ENCODE measurements at regions of chr3 and their contacts with region 1.

Region 1: GRCh38 chr3:154642145-154642544 is 212.2 kb upstream of the GPR149 start:
- DNase-seq: no peak
- ATAC-seq: no peak
- H3K4me3 ChIP-seq: no peak overlapping the region
- H3K4me3 Mint-ChIP-seq: no peak overlapping the region
- H3K27ac ChIP-seq: no peak overlapping the region
- H3K27ac Mint-ChIP-seq: no peak overlapping the region
- H3K4me1 ChIP-seq: no peaks in the 10 kb centered on the region
- H3K4me1 Mint-ChIP-seq: no peaks in the 10 kb centered on the region
- H3K27me3 ChIP-seq: no peaks in the 10 kb centered on the region
- H3K27me3 Mint-ChIP-seq: no peaks in the 10 kb centered on the region

Region 2: DNA sequence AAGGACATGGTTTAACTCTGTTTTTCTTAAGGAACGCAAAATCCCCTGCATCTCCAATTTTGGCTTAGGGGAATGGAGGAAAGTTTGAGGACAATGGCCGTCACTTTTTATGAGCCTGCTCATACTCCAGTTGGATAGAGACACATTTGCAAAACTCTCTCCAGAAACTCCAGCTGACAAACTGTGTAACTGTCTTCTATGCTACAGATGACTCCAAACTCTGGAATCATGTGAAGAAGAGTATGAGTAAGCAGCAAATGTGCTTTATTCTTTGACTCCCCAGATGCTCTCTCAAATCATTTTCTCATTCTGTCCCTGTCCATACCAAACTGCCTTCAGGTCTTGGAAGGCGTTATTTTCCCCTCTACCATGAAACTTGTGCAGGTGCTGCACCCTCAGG is 14.3 kb after region 1 on chr3:
- CTCF ChIA-PET with region 1: no interaction called
- POLR2A ChIA-PET with region 1: no interaction called
- DNase-seq: no peak
- ATAC-seq: no peak
- H3K4me3 ChIP-seq: no peak overlapping the region
- H3K4me3 Mint-ChIP-seq: no peak overlapping the region
- H3K27ac ChIP-seq: no peak overlapping the region
- H3K27ac Mint-ChIP-seq: no peak overlapping the region
- H3K4me1 ChIP-seq: no peaks in the 10 kb centered on the region
- H3K4me1 Mint-ChIP-seq: no peaks in the 10 kb centered on the region
- H3K27me3 ChIP-seq: no peaks in the 10 kb centered on the region
- H3K27me3 Mint-ChIP-seq: no peaks in the 10 kb centered on the region

Region 3: DNA sequence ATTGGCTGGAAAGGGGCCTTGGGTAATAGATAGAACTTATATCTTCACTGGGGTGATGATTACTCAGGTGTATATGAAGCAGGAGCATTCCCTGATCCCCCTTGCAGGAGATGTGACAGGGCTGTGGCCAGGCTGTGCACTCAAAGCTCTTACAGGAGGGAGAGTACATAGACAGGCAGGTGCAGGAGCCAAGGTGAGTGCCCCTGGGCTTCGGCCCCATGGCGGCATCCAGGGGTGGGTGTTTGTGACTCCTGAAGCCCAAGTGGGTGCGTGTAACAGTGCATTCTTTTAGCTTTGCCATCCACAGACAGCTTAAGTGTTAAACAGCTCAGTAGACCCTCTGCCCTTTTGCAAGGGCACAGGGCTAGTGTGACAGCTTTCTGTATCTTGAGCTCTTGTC is 24.4 kb after region 1 on chr3:
- CTCF ChIA-PET with region 1: no interaction called
- POLR2A ChIA-PET with region 1: interaction called in 1 of 2 experiments, 12 read pairs
- DNase-seq: no peak
- ATAC-seq: no peak
- H3K4me3 ChIP-seq: no peak overlapping the region
- H3K4me3 Mint-ChIP-seq: no peak overlapping the region
- H3K27ac ChIP-seq: no peak overlapping the region
- H3K27ac Mint-ChIP-seq: no peak overlapping the region
- H3K4me1 ChIP-seq: no peaks in the 10 kb centered on the region
- H3K4me1 Mint-ChIP-seq: no peaks in the 10 kb centered on the region
- H3K27me3 ChIP-seq: no peaks in the 10 kb centered on the region
- H3K27me3 Mint-ChIP-seq: peaks cover 0 to 3% of the 10 kb centered on the region in 2 donors

Region 4: GRCh38 chr3:154701055-154701454 is 58.9 kb after region 1 on chr3:
- CTCF ChIA-PET with region 1: interaction called in 1 of 2 experiments, 15 read pairs
- POLR2A ChIA-PET with region 1: no interaction called
- DNase-seq: no peak
- ATAC-seq: no peak
- H3K4me3 ChIP-seq: no peak overlapping the region
- H3K4me3 Mint-ChIP-seq: no peak overlapping the region
- H3K27ac ChIP-seq: no peak overlapping the region
- H3K27ac Mint-ChIP-seq: no peak overlapping the region
- H3K4me1 ChIP-seq: no peaks in the 10 kb centered on the region
- H3K4me1 Mint-ChIP-seq: no peaks in the 10 kb centered on the region
- H3K27me3 ChIP-seq: no peaks in the 10 kb centered on the region
- H3K27me3 Mint-ChIP-seq: no peaks in the 10 kb centered on the region

Measured in T-cell (primary cell).